ENCODE measurements at regions of chr9 and their contacts with region 1.

Region 1: DNA sequence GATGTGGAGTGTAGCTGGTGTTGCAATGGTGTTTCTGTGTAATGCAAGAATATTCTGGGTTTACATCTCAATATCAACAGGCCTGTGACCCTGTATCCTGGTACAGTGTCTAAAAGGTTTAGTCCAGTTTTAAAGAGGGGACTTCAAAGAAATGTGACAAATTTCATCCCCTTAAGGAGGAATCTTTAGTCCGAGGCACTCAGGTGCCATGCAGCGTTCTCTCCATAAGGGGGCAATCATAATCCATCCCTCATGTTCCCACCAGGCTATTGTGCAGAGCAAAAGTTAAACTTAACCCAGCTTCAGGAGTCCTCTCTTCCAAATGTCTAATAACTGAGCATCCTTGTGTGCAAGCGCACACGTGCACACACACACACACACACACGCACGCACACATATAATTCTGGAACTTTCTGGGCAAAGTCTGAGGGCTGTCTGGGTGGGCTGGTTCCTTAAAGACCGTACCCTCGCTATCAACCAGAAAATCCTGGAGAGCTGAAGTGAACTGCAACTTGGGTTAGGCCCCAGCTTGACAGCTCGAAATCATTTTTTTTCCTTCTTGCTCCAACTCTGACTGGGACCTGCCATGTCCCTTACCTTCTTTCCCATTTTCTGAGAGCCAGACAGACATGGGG is 46.0 kb downstream of the CRB2 start:
- DNase-seq: peak in 1 of 9 experiments; percentile 21
- ATAC-seq: no peak
- H3K4me3 ChIP-seq: no peak overlapping the region
- H3K4me3 Mint-ChIP-seq: no peak overlapping the region
- H3K27ac ChIP-seq: no peak overlapping the region
- H3K27ac Mint-ChIP-seq: no peak overlapping the region
- H3K4me1 ChIP-seq: no peaks in the 10 kb centered on the region
- H3K4me1 Mint-ChIP-seq: peaks cover 10% of the 10 kb centered on the region
- H3K27me3 ChIP-seq: no peaks in the 10 kb centered on the region
- H3K27me3 Mint-ChIP-seq: no peaks in the 10 kb centered on the region
- CTCF ChIP-seq: no peak

Region 2: DNA sequence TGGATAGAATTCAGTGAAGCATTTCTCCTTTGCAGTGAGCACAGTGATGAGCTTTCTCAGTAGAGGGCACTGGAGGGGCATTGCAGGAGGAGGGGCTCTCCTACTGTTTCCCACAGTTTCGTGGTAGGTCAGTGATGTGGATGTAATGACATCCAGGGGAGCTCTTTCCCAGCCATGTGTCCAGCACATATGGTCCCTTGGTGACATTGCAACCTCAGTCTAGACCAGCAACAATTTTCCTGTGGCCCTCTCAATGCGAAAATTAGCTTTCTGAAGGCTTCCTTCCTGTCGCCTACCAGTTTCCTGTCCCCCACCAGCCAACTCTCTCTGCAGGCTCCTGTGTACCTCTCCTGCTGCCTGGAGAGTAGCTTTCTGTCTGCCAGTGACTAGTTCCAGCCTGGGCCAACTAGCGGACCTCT is 566.7 kb before region 1 on chr9:
- CTCF ChIA-PET with region 1: no interaction called
- POLR2A ChIA-PET with region 1: no interaction called
- intact Hi-C with region 1: no loop called
- DNase-seq: peak in 7 of 9 experiments; percentile 8 to 64 (median 21)
- ATAC-seq: peak; percentile 79
- H3K4me3 ChIP-seq: peak overlapping the region; percentile 1 to 34
- H3K4me3 Mint-ChIP-seq: peak overlapping the region; percentile 75
- H3K27ac ChIP-seq: peak overlapping the region in 1 of 2 experiments; percentile 43
- H3K27ac Mint-ChIP-seq: peak overlapping the region; percentile 83
- H3K4me1 ChIP-seq: peaks cover 16% of the 10 kb centered on the region
- H3K4me1 Mint-ChIP-seq: peaks cover 19% of the 10 kb centered on the region
- H3K27me3 ChIP-seq: no peaks in the 10 kb centered on the region
- H3K27me3 Mint-ChIP-seq: no peaks in the 10 kb centered on the region
- CTCF ChIP-seq: no peak

Region 3: DNA sequence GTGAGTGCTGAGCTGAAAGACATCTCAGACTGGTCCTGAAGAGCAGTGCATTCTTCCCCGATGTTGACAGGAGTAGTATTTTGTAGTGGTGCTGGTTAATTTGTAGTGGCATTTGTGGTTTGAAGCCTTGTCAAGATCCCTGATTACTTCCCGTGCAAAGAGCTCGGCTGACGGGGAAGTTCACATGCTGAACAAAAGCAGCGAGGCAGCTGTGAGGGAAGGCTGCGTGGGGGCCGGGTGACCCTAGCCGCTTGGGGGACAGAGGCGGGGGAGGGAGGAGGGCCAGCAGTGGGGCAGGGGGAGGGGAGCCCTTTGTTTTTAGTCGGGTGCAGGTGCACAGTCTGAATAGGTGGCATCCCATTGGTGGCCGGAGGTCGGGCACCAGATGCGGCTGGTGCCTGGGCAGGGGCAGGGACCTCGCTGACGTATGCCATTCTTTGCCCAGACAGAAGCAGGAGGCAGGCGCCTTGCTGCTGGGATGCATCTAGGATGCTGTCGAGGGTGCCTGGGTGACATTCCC is 18.7 kb after region 1 on chr9:
- CTCF ChIA-PET with region 1: no interaction called
- POLR2A ChIA-PET with region 1: no interaction called
- intact Hi-C with region 1: no loop called
- DNase-seq: peak in 1 of 9 experiments; percentile 4
- ATAC-seq: no peak
- H3K4me3 ChIP-seq: no peak overlapping the region
- H3K4me3 Mint-ChIP-seq: no peak overlapping the region
- H3K27ac ChIP-seq: no peak overlapping the region
- H3K27ac Mint-ChIP-seq: no peak overlapping the region
- H3K4me1 ChIP-seq: no peaks in the 10 kb centered on the region
- H3K4me1 Mint-ChIP-seq: no peaks in the 10 kb centered on the region
- H3K27me3 ChIP-seq: no peaks in the 10 kb centered on the region
- H3K27me3 Mint-ChIP-seq: no peaks in the 10 kb centered on the region
- CTCF ChIP-seq: no peak

Region 4: GRCh38 chr9:124291801-124292396 is 889.9 kb after region 1 on chr9:
- CTCF ChIA-PET with region 1: no interaction called
- POLR2A ChIA-PET with region 1: no interaction called
- intact Hi-C with region 1: loop called in 1 of 2 experiments (anchors 10 kb)
- DNase-seq: peak in 3 of 9 experiments; percentile 28 to 57 (median 30)
- ATAC-seq: no peak
- H3K4me3 ChIP-seq: no peak overlapping the region
- H3K4me3 Mint-ChIP-seq: no peak overlapping the region
- H3K27ac ChIP-seq: no peak overlapping the region
- H3K27ac Mint-ChIP-seq: no peak overlapping the region
- H3K4me1 ChIP-seq: no peaks in the 10 kb centered on the region
- H3K4me1 Mint-ChIP-seq: peaks cover 4% of the 10 kb centered on the region
- H3K27me3 ChIP-seq: no peaks in the 10 kb centered on the region
- H3K27me3 Mint-ChIP-seq: peaks cover 4% of the 10 kb centered on the region
- CTCF ChIP-seq: no peak

Region 5: GRCh38 chr9:124532897-124533296 is 1130.9 kb after region 1 on chr9:
- CTCF ChIA-PET with region 1: interaction called, 3 read pairs
- POLR2A ChIA-PET with region 1: no interaction called
- intact Hi-C with region 1: loop called (anchors 10 kb)
- DNase-seq: no peak
- ATAC-seq: no peak
- H3K4me3 ChIP-seq: no peak overlapping the region
- H3K4me3 Mint-ChIP-seq: no peak overlapping the region
- H3K27ac ChIP-seq: no peak overlapping the region
- H3K27ac Mint-ChIP-seq: no peak overlapping the region
- H3K4me1 ChIP-seq: no peaks in the 10 kb centered on the region
- H3K4me1 Mint-ChIP-seq: no peaks in the 10 kb centered on the region
- H3K27me3 ChIP-seq: no peaks in the 10 kb centered on the region
- H3K27me3 Mint-ChIP-seq: no peaks in the 10 kb centered on the region
- CTCF ChIP-seq: no peak